Aorta (tissue), 5 donors: ENCODE measurements at regions of chr22 and their contacts with region 1.

Region 1: DNA sequence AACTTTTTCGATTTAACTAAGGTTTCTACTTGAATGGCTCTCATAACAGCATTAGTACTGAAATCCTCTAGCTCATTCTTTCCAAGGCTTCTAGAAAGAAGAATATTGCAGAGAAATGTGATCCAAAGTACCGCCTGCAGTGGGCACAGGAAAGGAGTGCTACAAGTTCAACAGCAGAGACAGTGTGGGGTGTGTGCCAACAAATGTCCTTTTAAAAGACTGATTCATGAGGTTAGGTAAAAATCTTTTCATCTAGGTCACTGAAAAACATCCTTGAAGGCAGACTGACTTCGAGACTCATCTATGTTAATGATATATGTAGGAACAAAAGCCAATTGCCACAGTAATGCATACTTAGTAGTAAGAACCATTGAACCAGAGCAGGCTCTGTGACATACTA is 349.1 kb upstream of the PITPNB start:
- DNase-seq: no peak
- ATAC-seq: no peak
- H3K4me3 ChIP-seq: no peak overlapping the region
- H3K27ac ChIP-seq: peak overlapping the region in 1 of 2 donors; percentile 57
- H3K4me1 ChIP-seq: peaks cover 2 to 9% of the 10 kb centered on the region in 2 donors
- H3K27me3 ChIP-seq: no peaks in the 10 kb centered on the region

Region 2: GRCh38 chr22:28207281-28208030 is 60.7 kb before region 1 on chr22:
- intact Hi-C with region 1: loop called in 1 of 2 experiments (anchors 10 kb)
- DNase-seq: no peak
- ATAC-seq: no peak
- H3K4me3 ChIP-seq: no peak overlapping the region
- H3K27ac ChIP-seq: no peak overlapping the region
- H3K4me1 ChIP-seq: peaks cover 2 to 4% of the 10 kb centered on the region in 2 donors
- H3K27me3 ChIP-seq: no peaks in the 10 kb centered on the region

Region 3: GRCh38 chr22:28231441-28231840 is 36.7 kb before region 1 on chr22:
- intact Hi-C with region 1: no loop called
- DNase-seq: no peak
- ATAC-seq: no peak
- H3K4me3 ChIP-seq: no peak overlapping the region
- H3K27ac ChIP-seq: no peak overlapping the region
- H3K4me1 ChIP-seq: peaks cover 2 to 11% of the 10 kb centered on the region in 2 donors
- H3K27me3 ChIP-seq: no peaks in the 10 kb centered on the region